ENCODE measurements at regions of chr3 and their contacts with region 1.

Region 1: DNA sequence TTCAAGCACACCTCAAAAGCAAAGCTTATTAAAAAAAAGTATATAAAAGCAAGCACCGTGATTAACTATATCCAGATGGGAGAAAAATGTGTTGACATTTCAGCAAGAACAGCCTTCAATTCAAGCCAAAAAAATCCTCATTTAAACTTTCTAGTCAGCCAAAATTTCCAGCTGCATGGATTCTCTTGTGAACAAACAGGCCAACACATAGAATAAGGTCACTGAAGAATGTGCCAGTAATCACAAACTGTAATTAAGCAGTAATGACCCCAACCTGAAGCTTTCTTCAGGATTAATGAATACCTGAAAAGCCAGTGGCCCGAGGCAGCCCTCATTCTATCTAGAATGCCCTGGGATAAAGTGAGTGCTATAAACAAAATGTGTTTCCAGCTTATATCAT is 130.7 kb upstream of the KCNMB2 start:
- DNase-seq: no peak
- H3K4me3 ChIP-seq: no peak overlapping the region
- H3K27ac ChIP-seq: no peak overlapping the region
- H3K4me1 ChIP-seq: no peaks in the 10 kb centered on the region
- CTCF ChIP-seq: no peak

Region 2: DNA sequence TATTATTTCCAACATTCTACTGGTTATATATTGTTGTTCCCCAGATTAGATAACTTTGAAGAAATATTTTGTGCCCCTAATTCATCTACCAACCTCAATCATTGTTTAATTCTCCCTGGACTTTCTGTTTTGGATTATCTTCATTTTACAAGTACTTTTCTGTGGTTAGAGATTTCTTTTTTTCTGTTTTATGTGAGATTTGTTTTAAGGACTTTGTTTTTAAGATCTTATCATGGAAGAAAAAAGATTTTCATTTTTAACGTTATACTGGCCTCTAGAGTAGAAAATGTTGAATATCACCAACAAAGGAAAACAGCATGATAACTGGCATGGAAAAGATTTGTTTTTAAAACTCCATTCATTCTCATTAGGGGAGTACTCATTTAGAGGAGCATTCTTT is 80.2 kb before region 1 on chr3:
- CTCF ChIA-PET with region 1: no interaction called
- POLR2A ChIA-PET with region 1: no interaction called
- intact Hi-C with region 1: no loop called
- DNase-seq: no peak
- H3K4me3 ChIP-seq: no peak overlapping the region
- H3K27ac ChIP-seq: no peak overlapping the region
- H3K4me1 ChIP-seq: no peaks in the 10 kb centered on the region
- CTCF ChIP-seq: 0 out of 2 replicates have a peak, but pooled peaks have one; percentile 26

Region 3: DNA sequence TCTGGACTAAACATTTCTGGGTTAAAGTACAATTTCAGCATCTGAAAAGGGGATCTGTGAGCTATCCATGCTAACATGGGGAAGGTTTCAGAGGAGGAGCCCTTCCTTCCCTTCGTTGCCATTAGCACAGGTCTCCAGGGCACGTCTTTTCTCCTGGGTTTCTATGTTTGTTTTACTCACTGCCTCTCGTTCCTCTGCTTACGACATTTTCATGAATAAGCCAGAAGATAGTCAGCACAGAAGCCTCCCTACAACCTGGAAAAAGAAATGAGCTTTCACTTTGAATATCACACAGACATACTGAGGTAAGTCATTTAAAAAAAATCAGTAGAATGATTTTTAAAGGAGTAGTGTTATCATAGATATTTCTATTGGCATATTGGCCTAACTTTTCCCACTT is 13.5 kb after region 1 on chr3:
- CTCF ChIA-PET with region 1: no interaction called
- POLR2A ChIA-PET with region 1: interaction called, 10 read pairs
- intact Hi-C with region 1: no loop called
- DNase-seq: no peak
- H3K4me3 ChIP-seq: no peak overlapping the region
- H3K27ac ChIP-seq: no peak overlapping the region
- H3K4me1 ChIP-seq: no peaks in the 10 kb centered on the region
- CTCF ChIP-seq: no peak

Region 4: DNA sequence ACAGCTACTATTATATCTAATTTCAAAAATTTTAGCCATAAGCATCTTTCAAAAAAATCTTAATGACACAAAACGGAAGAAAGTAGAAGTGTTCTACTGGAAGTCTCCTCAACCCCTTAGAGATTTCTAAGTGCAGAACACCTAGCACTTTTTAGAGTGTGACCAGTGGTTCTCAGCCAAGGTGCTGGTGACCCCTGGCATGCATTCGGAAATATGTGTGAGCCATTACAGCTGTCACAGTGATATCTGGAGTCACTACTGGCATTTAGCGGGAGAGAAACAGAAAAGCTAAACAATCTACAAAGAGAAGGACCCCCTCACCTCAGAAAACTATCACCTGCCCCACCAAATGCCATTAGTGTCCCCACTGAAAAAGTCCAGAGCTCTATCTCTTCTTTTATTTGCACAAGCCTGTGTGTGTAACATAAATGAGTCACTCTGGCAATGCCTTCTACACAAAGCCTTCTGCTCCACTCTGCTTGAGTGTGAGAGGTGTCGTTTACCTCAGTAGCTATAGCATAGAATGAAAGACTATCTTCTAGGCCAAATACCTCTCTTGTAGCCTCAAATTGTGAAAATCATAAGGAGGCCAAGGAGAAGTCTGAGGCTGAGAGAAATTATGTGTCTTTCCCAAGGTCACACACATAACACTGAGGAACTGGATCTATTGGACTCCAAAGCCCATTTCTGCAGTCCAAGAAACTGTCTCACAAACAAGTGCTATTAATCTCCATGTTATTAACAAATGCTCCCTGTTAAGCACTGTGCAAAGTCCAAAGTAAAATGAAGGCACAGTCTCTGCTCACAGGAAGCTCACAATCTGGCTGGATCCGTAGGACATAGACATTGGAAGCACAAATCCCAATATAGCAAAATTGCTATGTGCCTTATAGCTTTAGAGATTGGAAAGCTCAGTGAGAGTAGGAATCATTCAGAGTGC is 102.2 kb after region 1 on chr3:
- CTCF ChIA-PET with region 1: no interaction called
- POLR2A ChIA-PET with region 1: no interaction called
- intact Hi-C with region 1: no loop called
- DNase-seq: no peak
- H3K4me3 ChIP-seq: no peak overlapping the region
- H3K27ac ChIP-seq: no peak overlapping the region
- H3K4me1 ChIP-seq: no peaks in the 10 kb centered on the region
- CTCF ChIP-seq: no peak